ENCODE measurements at regions of chr12 and their contacts with region 1.

Region 1: GRCh38 chr12:39872425-39872824 is 233.5 kb downstream of the SLC2A13 start:
- DNase-seq: no peak
- H3K4me3 Mint-ChIP-seq: no peak overlapping the region
- H3K27ac Mint-ChIP-seq: no peak overlapping the region
- H3K4me1 Mint-ChIP-seq: no peaks in the 10 kb centered on the region
- H3K27me3 Mint-ChIP-seq: no peaks in the 10 kb centered on the region

Region 2: GRCh38 chr12:39831587-39832308 is 40.7 kb before region 1 on chr12:
- CTCF ChIA-PET with region 1: no interaction called
- intact Hi-C with region 1: loop called (anchors 1 kb)
- DNase-seq: no peak
- H3K4me3 Mint-ChIP-seq: no peak overlapping the region
- H3K27ac Mint-ChIP-seq: no peak overlapping the region
- H3K4me1 Mint-ChIP-seq: no peaks in the 10 kb centered on the region
- H3K27me3 Mint-ChIP-seq: no peaks in the 10 kb centered on the region